ENCODE measurements at regions of chr1 and their contacts with region 1.

Region 1: DNA sequence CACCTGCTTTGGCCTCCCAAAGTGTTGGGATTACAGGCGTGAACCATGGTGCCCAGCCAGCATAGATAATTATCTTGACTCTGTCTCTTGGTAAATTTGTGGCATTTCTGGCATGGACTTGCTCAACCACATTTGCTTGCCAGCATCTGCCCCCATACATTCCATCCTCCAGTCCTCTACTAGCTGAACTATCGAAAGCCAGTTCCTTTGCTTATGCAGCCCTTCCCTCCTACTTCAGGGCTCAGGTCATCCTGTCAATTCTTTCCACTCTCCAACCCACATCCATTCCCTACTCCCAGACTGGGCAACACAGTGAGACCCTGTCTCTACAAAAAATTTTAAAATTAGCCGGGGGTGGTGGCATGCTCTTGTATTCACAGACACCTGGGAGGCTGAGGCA is 13.0 kb upstream of the UQCRHL start:
- DNase-seq: no peak
- H3K4me3 ChIP-seq: no peak overlapping the region
- H3K27ac ChIP-seq: no peak overlapping the region
- H3K4me1 ChIP-seq: no peaks in the 10 kb centered on the region
- H3K27me3 ChIP-seq: no peaks in the 10 kb centered on the region
- CTCF ChIP-seq: no peak
- POLR2A ChIP-seq: no peak

Region 2: GRCh38 chr1:15703562-15703961 is 116.9 kb before region 1 on chr1:
- CTCF ChIA-PET with region 1: no interaction called
- POLR2A ChIA-PET with region 1: no interaction called
- dilution Hi-C with region 1: no loop called
- intact Hi-C with region 1: no loop called
- DNase-seq: peak; percentile 56
- H3K4me3 ChIP-seq: no peak overlapping the region
- H3K27ac ChIP-seq: peak overlapping the region; percentile 13
- H3K4me1 ChIP-seq: no peaks in the 10 kb centered on the region
- H3K27me3 ChIP-seq: no peaks in the 10 kb centered on the region
- CTCF ChIP-seq: no peak
- POLR2A ChIP-seq: no peak

Region 3: DNA sequence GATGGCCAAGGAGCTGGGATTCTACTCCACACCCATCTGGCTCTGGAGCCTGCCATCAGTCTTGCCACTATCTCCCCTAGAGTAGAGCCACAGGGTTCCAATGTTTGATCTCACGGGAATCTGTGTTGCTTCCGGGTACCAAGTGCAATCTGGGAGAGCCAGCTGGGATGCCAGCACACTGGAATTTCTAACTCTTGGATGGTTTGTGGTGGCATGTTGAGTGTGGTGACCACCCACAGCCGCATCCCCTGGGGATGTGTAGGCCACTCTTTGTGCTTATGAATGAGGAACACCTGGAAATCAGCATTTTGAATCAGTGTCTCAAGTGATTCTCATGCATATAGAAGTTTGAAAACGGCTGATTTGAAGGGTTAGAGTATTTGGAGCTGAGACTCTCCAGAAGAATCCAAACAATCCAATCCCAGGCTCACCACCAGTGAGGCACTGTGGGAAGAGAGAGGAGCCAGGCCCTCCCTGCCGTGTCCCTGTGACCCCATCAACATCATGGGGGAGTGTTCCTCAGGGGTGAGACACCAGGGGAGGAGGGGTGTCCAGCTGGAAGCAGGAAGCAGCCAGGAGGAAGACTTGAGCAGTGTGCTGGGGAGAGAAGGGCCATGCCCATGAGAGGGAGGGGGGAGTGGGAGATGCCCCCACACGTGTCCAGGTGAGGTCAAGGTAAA is 48.5 kb before region 1 on chr1:
- CTCF ChIA-PET with region 1: no interaction called
- POLR2A ChIA-PET with region 1: no interaction called
- dilution Hi-C with region 1: no loop called
- intact Hi-C with region 1: no loop called
- DNase-seq: no peak
- H3K4me3 ChIP-seq: no peak overlapping the region
- H3K27ac ChIP-seq: no peak overlapping the region
- H3K4me1 ChIP-seq: no peaks in the 10 kb centered on the region
- H3K27me3 ChIP-seq: no peaks in the 10 kb centered on the region
- CTCF ChIP-seq: no peak
- POLR2A ChIP-seq: no peak

Region 4: DNA sequence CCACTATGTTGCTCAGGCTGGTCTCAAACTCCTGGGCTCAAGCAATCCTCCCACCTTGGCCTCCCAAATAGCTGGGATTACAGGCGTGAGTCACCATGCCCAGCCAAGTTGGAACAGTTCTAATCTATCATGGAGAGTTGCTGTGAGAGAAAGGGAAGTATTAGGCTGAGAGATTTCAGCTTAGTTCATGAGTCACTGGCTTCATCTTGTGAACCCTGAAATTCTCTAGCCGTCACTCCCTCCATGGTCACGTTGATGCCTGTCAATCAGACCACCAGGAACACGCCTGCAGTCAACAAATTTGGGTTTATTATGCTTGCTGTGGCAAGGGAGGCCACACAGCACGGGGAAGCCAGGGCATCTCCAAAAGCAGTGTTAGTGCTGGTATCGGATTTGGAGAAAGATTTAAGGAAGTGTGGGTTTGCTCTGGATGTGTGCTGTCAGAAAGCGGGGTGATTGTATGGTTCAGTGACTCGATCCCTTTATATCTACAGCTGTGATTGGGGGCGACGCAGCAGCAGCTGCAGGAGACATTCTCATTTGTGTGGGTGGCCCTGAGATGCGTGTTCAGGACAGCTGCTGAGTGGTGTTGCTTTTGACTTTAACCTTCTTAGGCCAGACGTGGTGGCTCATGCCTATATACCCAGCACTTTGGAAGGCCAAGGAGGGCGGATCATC is 31.7 kb before region 1 on chr1:
- CTCF ChIA-PET with region 1: interaction called, 28 read pairs
- POLR2A ChIA-PET with region 1: no interaction called
- dilution Hi-C with region 1: no loop called
- intact Hi-C with region 1: no loop called
- DNase-seq: peak; percentile 53
- H3K4me3 ChIP-seq: no peak overlapping the region
- H3K27ac ChIP-seq: no peak overlapping the region
- H3K4me1 ChIP-seq: no peaks in the 10 kb centered on the region
- H3K27me3 ChIP-seq: no peaks in the 10 kb centered on the region
- CTCF ChIP-seq: no peak
- POLR2A ChIP-seq: no peak

Region 5: GRCh38 chr1:15835741-15836510 is 15.4 kb after region 1 on chr1:
- CTCF ChIA-PET with region 1: interaction called, 21 read pairs
- POLR2A ChIA-PET with region 1: interaction called, 10 read pairs
- dilution Hi-C with region 1: no loop called
- intact Hi-C with region 1: no loop called
- DNase-seq: peak; percentile 100
- H3K4me3 ChIP-seq: peak overlapping the region in 2 of 3 experiments; percentile 58 to 66
- H3K27ac ChIP-seq: peak overlapping the region; percentile 95
- H3K4me1 ChIP-seq: peaks cover 3% of the 10 kb centered on the region
- H3K27me3 ChIP-seq: no peaks in the 10 kb centered on the region
- CTCF ChIP-seq: no peak
- POLR2A ChIP-seq: peak; percentile 85

Region 6: DNA sequence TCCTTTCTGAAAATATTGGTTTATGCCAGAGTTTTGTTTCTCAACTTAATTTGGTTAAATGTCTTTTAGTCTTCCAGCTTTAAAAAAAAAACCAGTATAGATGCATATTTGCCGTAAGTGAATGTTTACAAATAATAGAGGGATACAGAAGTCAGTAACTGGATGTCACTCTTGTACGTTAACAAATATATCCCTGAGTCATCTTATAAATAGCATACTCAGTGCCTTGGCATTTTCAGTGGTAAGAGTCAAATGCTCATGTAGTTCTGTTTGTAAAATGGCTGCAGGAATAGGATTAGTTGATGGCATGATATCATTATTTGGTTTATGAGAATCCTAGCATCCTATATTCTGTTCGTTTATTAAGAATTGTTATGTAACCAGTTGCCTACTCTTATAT is 82.4 kb after region 1 on chr1:
- CTCF ChIA-PET with region 1: interaction called, 15 read pairs
- POLR2A ChIA-PET with region 1: interaction called, 3 read pairs
- dilution Hi-C with region 1: no loop called
- intact Hi-C with region 1: loop called (anchors 5 kb)
- DNase-seq: no peak
- H3K4me3 ChIP-seq: no peak overlapping the region
- H3K27ac ChIP-seq: no peak overlapping the region
- H3K4me1 ChIP-seq: peaks cover 5% of the 10 kb centered on the region
- H3K27me3 ChIP-seq: no peaks in the 10 kb centered on the region
- CTCF ChIP-seq: no peak
- POLR2A ChIP-seq: no peak

Region 7: DNA sequence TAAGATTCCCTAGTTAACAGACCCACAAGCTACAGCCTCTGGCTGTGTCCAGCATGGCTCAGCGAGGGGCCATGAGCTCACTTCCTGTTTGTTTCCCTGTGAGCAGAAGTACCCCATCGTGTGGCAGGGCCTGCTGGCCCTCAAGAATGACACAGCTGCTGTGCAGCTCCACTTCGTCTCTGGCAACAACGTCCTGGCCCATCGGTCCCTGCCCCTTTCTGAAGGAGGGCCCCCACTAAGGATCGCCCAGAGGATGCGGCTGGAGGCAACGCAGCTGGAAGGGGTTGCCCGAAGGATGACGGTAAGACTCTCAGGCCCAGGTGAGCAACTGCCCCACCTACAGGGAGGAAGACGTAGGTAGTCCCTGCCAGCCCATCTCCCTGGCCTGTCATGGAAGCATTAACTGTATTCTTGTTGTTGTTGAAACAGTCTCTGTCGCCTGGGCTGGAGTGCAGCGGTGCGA is 117.3 kb after region 1 on chr1:
- CTCF ChIA-PET with region 1: interaction called, 31 read pairs
- POLR2A ChIA-PET with region 1: no interaction called
- dilution Hi-C with region 1: no loop called
- intact Hi-C with region 1: loop called (anchors 1 kb)
- DNase-seq: peak; percentile 75
- H3K4me3 ChIP-seq: no peak overlapping the region
- H3K27ac ChIP-seq: peak overlapping the region; percentile 72
- H3K4me1 ChIP-seq: peaks cover 26% of the 10 kb centered on the region
- H3K27me3 ChIP-seq: no peaks in the 10 kb centered on the region
- CTCF ChIP-seq: peak in 1 of 2 donors; percentile 46
- POLR2A ChIP-seq: no peak

Region 8: DNA sequence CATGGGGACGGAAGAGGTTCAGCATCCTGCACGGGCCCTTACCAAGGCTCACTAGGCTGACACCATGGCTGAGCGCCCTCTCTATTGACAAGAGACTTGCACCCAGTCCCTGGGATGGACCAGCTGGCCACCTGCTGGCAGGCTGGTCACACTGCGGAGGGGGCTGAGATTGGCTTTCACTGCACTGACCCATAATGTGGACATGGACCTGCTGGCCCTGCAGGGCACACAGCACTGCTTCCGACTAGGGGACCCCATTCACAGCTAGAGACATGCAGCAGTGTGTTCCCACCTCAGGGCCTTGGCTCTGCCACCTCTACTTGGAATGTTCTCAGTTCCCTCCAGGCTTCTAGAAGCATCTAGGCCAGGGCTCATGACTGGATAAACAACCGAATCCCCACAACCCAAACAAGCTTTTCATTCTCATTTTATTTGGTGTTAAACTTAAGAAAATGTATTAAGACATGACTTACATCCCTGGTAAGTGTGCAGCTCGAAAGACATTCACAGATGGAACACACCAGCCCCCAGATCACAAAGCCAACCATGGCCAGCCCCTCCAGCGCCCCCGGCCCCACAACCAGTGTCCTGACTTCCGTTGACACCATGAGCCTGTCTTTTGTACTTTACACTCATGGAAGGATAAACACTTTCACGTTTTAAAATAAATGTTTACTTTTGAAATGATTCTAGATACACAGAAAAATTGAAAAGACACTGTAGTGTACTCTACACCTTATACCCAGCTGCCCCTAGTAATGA is 174.3 kb after region 1 on chr1:
- CTCF ChIA-PET with region 1: interaction called, 31 read pairs
- POLR2A ChIA-PET with region 1: no interaction called
- dilution Hi-C with region 1: no loop called
- intact Hi-C with region 1: loop called (anchors 1 kb)
- DNase-seq: peak; percentile 71
- H3K4me3 ChIP-seq: no peak overlapping the region
- H3K27ac ChIP-seq: no peak overlapping the region
- H3K4me1 ChIP-seq: no peaks in the 10 kb centered on the region
- H3K27me3 ChIP-seq: peaks cover 0 to 2% of the 10 kb centered on the region in 2 experiments
- CTCF ChIP-seq: peak; percentile 88 to 96
- POLR2A ChIP-seq: no peak

Measured in endothelial cell of umbilical vein (primary cell).